HEK293 (cell line): ENCODE measurements at regions of chr1 and their contacts with region 1.

Region 1: DNA sequence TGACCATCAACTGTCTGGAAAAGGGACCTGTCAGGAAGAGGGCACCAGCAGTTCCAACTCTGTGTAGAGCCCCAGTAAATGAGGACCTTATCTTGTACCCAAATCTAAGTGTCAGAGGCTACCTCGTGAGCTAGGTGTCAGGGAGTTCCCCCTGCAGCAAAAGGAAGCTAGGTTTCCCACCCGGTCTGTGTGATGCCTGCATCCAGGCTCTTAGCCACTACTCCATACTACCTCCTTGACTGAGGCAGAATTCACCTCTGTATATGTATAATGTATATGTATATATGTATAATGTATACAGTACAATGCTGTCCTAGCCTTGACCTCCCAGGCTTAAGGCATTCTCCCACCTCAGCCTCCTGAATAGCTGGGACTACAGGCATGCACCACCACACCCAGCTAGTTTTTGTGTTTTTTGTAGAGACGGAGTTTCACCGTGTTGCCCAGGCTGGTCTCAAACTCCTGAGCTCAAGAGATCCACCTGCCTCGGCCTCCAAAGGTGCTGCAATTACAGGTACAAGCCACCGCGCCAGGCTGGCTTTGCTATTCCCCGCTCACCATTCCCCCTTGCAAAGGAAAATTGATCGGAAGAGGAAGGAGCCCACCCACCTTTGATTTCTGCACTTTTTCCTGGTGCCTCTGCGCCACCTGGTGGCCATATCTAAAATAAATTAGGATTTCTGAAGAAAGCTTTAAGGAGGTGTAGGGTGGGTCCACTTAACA is 15.7 kb upstream of the LUZP1 start:
- H3K4me3 ChIP-seq: no peak overlapping the region
- H3K27ac ChIP-seq: no peak overlapping the region
- H3K4me1 ChIP-seq: no peaks in the 10 kb centered on the region
- CTCF ChIP-seq: peak; percentile 53; the same call in 1 of the 2 replicates

Region 2: DNA sequence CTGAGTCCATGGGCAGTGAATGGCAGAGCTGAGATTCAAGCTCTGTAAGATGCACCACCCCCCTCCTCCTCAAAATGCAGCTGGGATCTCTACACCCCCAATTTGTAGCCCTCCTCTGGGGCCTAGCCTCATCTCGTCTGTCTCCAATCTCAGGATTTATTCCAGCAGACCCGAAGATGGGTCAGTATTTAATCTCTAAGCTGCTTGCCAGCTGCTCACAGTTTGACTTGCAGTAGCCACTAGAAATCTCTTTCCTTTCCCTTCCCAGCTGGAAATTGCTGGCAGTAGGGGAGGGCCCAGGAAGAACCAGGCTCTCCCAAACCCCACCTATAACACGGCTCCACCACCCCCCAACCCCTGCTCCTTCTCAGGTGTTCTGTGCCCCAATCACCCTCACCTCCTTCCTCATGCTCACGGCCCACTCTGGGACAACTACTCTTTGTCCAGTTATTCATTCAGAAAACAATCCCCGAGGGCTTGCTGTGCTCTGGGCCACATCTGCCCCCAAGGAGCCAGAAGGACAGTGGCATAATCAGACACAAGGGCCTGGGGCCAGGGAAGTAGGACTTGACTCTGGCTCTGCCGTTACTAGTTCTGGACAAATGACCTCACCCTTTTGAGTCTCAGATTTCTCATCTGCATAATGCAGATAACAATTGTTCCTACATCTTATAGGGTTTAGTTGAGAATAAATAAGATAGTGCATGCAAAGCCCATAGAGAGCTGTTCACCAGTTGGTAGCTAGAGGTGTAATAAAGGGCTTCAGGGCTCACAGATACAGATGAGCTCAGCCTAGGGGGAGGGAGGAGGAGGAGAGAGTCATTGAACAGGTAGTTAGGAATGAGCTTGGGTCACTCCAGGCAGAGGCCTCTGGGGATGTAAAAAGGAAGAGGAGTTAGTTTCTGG is 213.0 kb before region 1 on chr1:
- CTCF ChIA-PET with region 1: interaction called, 61 read pairs
- POLR2A ChIA-PET with region 1: no interaction called
- H3K4me3 ChIP-seq: no peak overlapping the region
- H3K27ac ChIP-seq: no peak overlapping the region
- H3K4me1 ChIP-seq: 0 out of 2 replicates have a peak, but pooled peaks cover 3% of the 10 kb centered on the region
- CTCF ChIP-seq: no peak

Region 3: DNA sequence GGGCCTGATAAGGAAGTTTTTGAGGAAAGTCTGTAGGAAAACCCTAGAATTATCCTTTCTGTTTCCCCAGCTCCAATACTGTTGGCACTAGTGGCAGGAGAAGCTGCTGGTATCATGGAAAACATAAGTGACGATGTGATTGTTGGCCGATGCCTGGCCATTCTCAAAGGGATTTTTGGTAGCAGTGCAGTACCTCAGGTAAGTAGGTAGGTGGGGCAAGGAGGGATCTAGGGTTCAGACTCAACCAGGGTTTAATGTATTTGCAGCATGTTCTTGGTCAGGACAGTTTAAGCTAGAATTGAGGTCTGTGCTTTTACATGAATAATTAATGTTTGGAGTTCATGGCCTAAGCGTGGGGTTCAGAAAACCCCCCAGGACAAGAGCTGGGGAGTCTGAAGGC is 103.0 kb before region 1 on chr1:
- CTCF ChIA-PET with region 1: interaction called, 29 read pairs
- POLR2A ChIA-PET with region 1: no interaction called
- H3K4me3 ChIP-seq: no peak overlapping the region
- H3K27ac ChIP-seq: no peak overlapping the region
- H3K4me1 ChIP-seq: no peaks in the 10 kb centered on the region
- CTCF ChIP-seq: no peak

Region 4: GRCh38 chr1:23098463-23099170 is 85.8 kb before region 1 on chr1:
- CTCF ChIA-PET with region 1: interaction called, 333 read pairs
- POLR2A ChIA-PET with region 1: interaction called, 13 read pairs
- H3K4me3 ChIP-seq: no peak overlapping the region
- H3K27ac ChIP-seq: no peak overlapping the region
- H3K4me1 ChIP-seq: peaks cover 32% of the 10 kb centered on the region
- CTCF ChIP-seq: peak; percentile 77

Region 5: GRCh38 chr1:23168457-23169194 is 15.7 kb before region 1 on chr1 and contains the start of gene LUZP1:
- CTCF ChIA-PET with region 1: interaction called, 17 read pairs
- POLR2A ChIA-PET with region 1: interaction called, 16 read pairs
- H3K4me3 ChIP-seq: peak within 1 kb of the TSS; percentile 73
- H3K27ac ChIP-seq: peak within 1 kb of the TSS; percentile 76
- H3K4me1 ChIP-seq: peaks cover 14% of the 10 kb centered on the region
- CTCF ChIP-seq: 0 out of 2 replicates have a peak, but pooled peaks have one; percentile 13

Region 6: GRCh38 chr1:23210351-23210785 is 26.0 kb after region 1 on chr1:
- CTCF ChIA-PET with region 1: interaction called, 10 read pairs
- POLR2A ChIA-PET with region 1: no interaction called
- H3K4me3 ChIP-seq: no peak overlapping the region
- H3K27ac ChIP-seq: no peak overlapping the region
- H3K4me1 ChIP-seq: no peaks in the 10 kb centered on the region
- CTCF ChIP-seq: no peak